ENCODE measurements at regions of chr11 and their contacts with region 1.

Region 1: DNA sequence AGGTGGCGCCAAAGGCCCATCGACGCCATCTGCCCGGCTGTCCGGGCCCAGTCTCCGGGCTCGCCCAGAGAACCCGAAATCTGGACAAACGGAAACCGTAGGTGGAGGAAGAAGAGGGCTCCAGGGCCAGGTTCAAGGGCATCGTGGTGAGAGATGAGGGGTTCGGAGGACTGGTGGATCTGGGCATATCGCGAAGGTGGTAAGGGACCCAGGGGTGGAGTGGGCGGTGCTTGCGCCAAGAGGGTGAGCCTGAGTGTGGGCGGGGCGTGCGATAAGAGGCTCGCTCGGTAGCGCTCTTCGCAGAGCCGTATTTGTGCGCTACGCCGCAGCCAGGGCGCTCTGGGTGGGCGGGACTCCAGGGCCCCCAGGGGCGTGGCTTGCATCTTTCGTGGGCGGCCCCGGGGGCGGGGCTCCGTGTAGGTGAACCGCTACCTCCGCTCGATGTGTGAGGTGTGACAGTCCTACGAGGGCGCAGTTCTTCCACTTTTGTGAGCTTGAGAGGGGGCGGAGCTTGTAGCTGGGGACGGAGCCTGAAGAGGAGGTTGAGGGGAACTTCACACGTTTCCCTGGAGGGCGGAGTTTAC is 4.8 kb downstream of the CD248 start:
- DNase-seq: peak; percentile 94
- H3K4me3 ChIP-seq: peak overlapping the region; percentile 35 to 82 (median 79)
- H3K27ac ChIP-seq: peak overlapping the region; percentile 52
- H3K4me1 ChIP-seq: peaks cover 4% of the 10 kb centered on the region
- H3K27me3 ChIP-seq: peaks cover 0 to 5% of the 10 kb centered on the region in 2 experiments
- CTCF ChIP-seq: peak in 1 of 2 donors; percentile 94
- POLR2A ChIP-seq: peak; percentile 9

Region 2: DNA sequence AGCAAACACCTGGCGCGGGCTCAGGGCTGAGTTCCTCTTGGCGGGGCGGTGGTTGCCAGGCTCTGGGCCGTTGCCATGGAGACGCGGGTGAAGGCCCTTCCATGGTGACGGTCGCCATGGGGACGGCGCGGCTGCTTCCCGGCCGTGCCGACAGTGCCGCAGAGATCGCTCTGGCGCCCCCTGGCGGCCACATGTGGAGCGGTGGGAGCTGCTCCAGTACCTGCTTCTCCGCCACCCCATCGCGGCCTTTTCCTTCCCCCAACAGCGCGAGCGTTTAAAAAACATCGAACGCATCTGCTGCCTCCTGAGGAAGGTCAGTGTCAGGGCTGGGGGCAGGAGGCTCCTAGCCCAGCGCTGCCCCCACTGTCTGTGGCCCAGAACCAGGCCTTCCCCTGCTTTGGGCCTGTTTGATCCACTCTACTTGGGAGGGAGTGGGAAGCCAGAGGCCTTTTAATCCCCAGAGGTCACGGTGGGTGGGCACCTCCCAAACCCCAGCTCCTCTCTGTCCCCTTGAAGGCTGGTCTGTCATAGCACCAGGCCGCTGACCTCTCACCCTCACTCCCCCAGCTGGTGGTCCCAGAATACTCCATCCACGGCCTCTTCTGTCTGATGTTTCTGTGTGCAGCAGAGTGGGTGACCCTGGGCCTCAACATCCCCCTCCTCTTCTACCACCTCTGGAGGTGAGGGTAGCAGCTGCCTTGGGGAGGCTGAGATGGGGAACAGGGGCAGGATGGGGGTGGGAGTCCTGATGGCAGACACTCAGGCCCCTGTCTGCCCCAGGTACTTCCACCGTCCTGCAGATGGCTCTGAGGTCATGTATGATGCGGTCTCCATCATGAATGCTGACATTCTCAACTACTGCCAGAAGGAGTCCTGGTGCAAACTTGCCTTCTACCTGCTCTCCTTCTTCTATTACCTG is 29.3 kb before region 1 on chr11:
- CTCF ChIA-PET with region 1: interaction called, 10 read pairs
- POLR2A ChIA-PET with region 1: no interaction called
- dilution Hi-C with region 1: no loop called
- intact Hi-C with region 1: no loop called
- DNase-seq: peak; percentile 92
- H3K4me3 ChIP-seq: no peak overlapping the region
- H3K27ac ChIP-seq: no peak overlapping the region
- H3K4me1 ChIP-seq: peaks cover under 1% of the 10 kb centered on the region
- H3K27me3 ChIP-seq: peaks cover 0 to 4% of the 10 kb centered on the region in 2 experiments
- CTCF ChIP-seq: peak; percentile 98 to 100
- POLR2A ChIP-seq: peak; percentile 74

Region 3: GRCh38 chr11:66299186-66299585 is 12.9 kb before region 1 on chr11:
- CTCF ChIA-PET with region 1: interaction called, 27 read pairs
- POLR2A ChIA-PET with region 1: no interaction called
- dilution Hi-C with region 1: no loop called
- intact Hi-C with region 1: no loop called
- DNase-seq: no peak
- H3K4me3 ChIP-seq: no peak overlapping the region
- H3K27ac ChIP-seq: no peak overlapping the region
- H3K4me1 ChIP-seq: no peaks in the 10 kb centered on the region
- H3K27me3 ChIP-seq: peaks cover 0 to 2% of the 10 kb centered on the region in 2 experiments
- CTCF ChIP-seq: no peak
- POLR2A ChIP-seq: no peak

Region 4: DNA sequence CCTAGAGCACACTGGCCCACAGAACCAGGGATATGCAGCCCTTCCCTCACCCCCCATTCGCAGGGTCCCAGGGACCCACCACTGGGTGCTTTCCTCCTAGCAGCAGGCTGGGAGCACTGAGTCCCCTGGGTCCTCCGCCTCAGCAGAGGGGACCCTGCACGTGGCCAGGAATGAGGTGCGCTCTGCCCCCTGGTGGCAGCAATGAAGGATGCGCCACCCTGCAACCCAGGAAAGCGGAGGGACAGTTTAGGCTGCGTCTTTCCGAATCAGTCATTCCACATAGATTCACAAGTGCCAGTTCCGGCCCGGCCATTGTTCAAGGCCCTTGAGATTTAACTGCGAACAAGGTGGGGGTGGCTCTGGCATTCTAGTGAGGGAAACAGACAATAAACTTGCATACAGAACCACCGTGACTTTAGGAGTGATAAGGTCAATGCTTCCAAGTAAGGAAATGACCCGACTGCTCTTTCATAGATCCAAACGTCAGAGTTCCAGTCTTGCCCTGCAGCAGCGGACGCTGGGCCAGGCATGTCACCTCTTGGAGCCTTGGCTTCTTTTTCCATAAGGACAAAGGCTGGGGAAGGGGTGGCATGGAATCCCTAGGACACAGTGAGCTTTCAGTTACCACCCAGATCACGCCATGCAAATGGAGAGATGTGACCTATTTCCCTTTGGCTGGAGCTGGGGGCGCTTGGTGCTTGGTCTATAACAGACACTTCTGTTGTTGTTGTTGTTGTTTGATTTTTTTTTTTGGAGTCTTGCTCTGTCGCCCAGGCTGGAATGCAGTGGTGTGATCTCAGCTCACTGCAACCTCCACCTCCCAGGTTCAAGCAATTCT is 16.5 kb after region 1 on chr11:
- CTCF ChIA-PET with region 1: interaction called, 225 read pairs
- POLR2A ChIA-PET with region 1: interaction called, 4 read pairs
- dilution Hi-C with region 1: no loop called
- intact Hi-C with region 1: loop called (anchors 1 kb)
- DNase-seq: peak; percentile 67
- H3K4me3 ChIP-seq: no peak overlapping the region
- H3K27ac ChIP-seq: no peak overlapping the region
- H3K4me1 ChIP-seq: peaks cover 7% of the 10 kb centered on the region
- H3K27me3 ChIP-seq: no peaks in the 10 kb centered on the region
- CTCF ChIP-seq: peak; percentile 93
- POLR2A ChIP-seq: no peak

Region 5: DNA sequence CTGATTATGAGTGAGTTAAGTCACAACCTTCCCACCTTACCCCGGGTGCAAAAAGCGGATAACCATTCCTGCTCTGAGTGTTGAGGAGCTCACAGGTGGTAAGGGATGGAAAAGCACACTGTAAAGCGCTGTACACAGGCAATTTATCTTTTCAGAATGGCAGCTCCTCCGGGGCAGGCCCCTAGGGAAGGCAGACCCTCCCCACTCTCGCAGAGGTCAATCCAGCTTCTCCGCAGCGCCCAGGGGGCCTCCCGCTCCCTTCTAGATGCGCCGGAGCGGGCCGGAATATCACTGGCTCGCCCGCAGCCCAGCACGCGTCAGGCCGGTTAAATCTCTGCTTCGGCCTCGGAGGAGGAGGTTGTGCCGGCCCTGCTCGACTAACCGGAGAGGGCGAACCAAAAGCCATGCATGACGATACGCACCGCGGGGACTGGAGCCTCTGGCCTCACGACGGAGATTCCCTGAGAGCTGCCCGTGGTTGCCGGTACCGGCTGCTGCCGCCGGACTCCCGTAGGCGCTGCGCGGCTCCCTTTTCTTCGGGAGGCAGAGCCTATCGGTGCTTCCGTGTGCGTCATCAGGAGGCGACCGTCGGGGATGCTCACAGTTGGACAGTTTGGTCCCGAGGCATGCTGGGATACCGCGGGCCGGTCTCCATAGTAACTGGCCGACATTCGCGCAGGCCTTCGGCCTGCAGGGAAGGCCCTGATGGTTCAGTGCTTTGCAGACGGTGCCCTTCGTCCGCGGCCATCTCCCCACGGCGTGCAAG is 32.7 kb after region 1 on chr11 and contains the start of gene BRMS1:
- CTCF ChIA-PET with region 1: interaction called, 7 read pairs
- POLR2A ChIA-PET with region 1: no interaction called
- dilution Hi-C with region 1: no loop called
- intact Hi-C with region 1: loop called (anchors 1 kb)
- DNase-seq: peak; percentile 96
- H3K4me3 ChIP-seq: peak within 1 kb of the TSS; percentile 61 to 98 (median 82)
- H3K27ac ChIP-seq: peak within 1 kb of the TSS; percentile 62
- H3K4me1 ChIP-seq: peaks cover 14% of the 10 kb centered on the region
- H3K27me3 ChIP-seq: no peaks in the 10 kb centered on the region
- CTCF ChIP-seq: no peak
- POLR2A ChIP-seq: peak; percentile 97
- total RNA-seq, gene BRMS1: 51.1 and 53.1 TPM in 2 replicates

Region 6: DNA sequence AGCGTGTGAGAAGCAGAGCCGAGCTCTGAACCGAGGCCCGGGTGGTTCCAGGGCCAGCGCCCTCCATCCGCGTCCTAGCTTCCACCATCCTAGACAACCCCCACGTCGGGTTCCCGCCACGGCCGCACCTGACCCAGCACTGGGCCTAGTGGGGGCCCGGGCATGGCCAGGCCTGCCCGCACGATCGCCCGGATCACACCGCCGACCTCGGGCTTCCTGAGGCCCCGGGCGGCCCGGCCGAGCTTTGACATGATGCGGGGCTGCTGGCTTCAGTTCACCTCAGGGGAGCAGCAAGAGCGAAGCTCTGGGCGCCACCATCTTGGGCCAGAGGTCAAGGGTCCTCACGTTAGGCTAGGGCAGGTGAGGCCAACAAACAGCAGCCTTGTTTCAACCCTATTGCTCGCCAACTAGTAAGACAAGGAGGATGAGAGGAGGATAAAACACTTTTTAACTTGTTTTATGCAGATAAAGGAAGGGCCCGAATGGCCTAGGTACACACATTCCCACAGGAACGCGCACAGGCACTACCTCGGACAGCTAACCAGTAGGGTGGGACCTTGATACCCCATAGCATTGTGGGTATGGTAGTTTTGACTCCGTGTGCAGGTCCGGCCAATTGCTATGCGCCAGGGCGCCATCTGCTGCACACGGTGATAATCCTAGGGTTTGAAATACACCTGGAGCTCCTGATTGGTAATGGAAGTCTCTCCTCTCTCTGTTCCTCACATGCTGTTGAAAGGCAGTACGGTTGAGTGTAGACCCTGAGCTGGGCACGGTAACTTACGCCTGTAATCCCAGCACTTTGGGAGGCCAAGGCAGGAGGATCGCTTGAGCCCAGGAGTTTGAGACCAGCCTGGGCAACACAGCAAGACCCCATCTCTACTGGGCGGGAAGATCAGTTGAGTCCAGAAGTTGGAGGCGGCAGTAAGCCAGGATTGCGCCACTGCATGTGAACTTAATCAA is 126.7 kb after region 1 on chr11 and contains the start of gene MRPL11:
- CTCF ChIA-PET with region 1: interaction called, 11 read pairs
- POLR2A ChIA-PET with region 1: no interaction called
- dilution Hi-C with region 1: no loop called
- intact Hi-C with region 1: loop called (anchors 5 kb)
- DNase-seq: peak; percentile 95
- H3K4me3 ChIP-seq: peak within 1 kb of the TSS; percentile 59 to 80 (median 64)
- H3K27ac ChIP-seq: peak within 1 kb of the TSS; percentile 77
- H3K4me1 ChIP-seq: peaks cover 6% of the 10 kb centered on the region
- H3K27me3 ChIP-seq: no peaks in the 10 kb centered on the region
- CTCF ChIP-seq: peak; percentile 70 to 77
- POLR2A ChIP-seq: no peak
- total RNA-seq, gene MRPL11: 69.1 and 72.1 TPM in 2 replicates

Region 7: GRCh38 chr11:66607126-66607834 is 295.2 kb after region 1 on chr11:
- CTCF ChIA-PET with region 1: no interaction called
- POLR2A ChIA-PET with region 1: no interaction called
- dilution Hi-C with region 1: no loop called
- intact Hi-C with region 1: no loop called
- DNase-seq: no peak
- H3K4me3 ChIP-seq: no peak overlapping the region
- H3K27ac ChIP-seq: no peak overlapping the region
- H3K4me1 ChIP-seq: peaks cover 3% of the 10 kb centered on the region
- H3K27me3 ChIP-seq: no peaks in the 10 kb centered on the region
- CTCF ChIP-seq: no peak
- POLR2A ChIP-seq: no peak